ENCODE measurements at regions of chr22 and their contacts with region 1.

Region 1: DNA sequence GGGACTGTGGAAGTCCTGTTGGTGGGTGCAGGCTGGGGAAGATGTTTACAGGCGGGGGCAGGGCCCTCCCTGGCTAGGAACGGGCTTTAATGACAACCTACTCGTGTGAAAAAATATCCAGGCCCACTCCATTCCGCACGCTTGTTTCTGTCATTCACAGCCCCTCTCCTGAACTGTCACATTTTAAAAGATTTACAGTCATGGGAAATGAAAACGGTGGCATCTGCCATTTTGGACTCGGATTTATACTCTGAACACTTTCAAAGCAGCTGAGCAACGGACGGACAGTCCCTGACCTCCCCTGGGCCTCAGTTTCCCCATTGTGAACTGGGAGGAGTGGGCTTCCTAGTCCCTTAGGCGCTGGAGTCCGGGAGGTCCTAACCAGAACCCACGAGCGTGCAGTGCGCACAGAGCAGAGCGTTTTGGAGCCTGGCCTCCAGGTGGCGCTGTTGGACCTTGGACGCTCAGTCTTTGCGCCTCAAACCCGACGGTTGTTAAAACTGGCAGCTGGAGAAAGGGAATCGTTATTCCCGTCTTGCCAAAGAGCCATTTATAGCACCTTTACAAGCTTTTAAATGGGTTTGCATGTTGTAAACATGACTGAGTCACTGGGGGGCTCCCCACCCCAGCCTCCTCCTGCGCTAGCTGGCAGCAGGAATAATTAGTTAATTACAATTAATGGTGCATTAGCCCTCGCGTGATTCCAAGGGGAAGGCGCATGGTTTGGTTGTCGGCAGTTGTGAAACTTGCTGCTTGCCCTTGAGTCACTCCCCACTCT is 75.3 kb downstream of the FBLN1 start:
- H3K4me3 ChIP-seq: no peak overlapping the region
- H3K27ac ChIP-seq: no peak overlapping the region
- H3K4me1 ChIP-seq: no peaks in the 10 kb centered on the region
- CTCF ChIP-seq: peak; percentile 92

Region 2: DNA sequence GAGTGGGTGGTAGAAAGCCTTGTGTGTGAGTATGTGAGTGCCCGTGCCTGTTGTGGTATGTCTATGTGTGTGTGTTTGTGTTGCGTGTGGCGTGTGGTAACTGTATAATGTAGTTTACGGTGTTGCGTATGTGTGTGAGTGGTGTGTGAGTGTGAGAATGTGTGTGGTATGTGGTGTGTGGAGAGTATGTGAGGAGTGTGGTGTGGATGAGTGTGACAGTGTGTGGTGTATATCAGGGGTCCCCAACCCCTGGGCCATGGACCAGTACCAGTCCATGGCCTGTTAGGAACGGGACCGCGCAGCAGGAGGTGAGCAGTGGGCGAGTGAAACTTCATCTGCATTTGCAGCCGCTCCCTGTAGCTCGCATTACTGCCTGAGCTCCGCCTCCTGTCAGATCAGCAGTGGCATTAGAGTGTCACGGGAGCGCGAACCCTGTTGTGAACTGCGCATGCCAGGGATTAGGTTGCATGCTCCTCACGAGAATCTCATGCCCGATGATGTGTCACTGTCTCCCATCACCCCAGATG is 287.5 kb before region 1 on chr22:
- CTCF ChIA-PET with region 1: no interaction called
- POLR2A ChIA-PET with region 1: no interaction called
- H3K4me3 ChIP-seq: no peak overlapping the region
- H3K27ac ChIP-seq: no peak overlapping the region
- H3K4me1 ChIP-seq: no peaks in the 10 kb centered on the region
- CTCF ChIP-seq: no peak

Region 3: GRCh38 chr22:45564349-45565032 is 13.4 kb before region 1 on chr22:
- CTCF ChIA-PET with region 1: interaction called, 17 read pairs
- POLR2A ChIA-PET with region 1: no interaction called
- H3K4me3 ChIP-seq: no peak overlapping the region
- H3K27ac ChIP-seq: no peak overlapping the region
- H3K4me1 ChIP-seq: no peaks in the 10 kb centered on the region
- CTCF ChIP-seq: no peak

Region 4: GRCh38 chr22:45645526-45646414 is 67.8 kb after region 1 on chr22:
- CTCF ChIA-PET with region 1: interaction called, 14 read pairs
- POLR2A ChIA-PET with region 1: no interaction called
- H3K4me3 ChIP-seq: no peak overlapping the region
- H3K27ac ChIP-seq: no peak overlapping the region
- H3K4me1 ChIP-seq: no peaks in the 10 kb centered on the region
- CTCF ChIP-seq: peak; percentile 84